ENCODE measurements at regions of chr12 and their contacts with region 1.

Region 1: DNA sequence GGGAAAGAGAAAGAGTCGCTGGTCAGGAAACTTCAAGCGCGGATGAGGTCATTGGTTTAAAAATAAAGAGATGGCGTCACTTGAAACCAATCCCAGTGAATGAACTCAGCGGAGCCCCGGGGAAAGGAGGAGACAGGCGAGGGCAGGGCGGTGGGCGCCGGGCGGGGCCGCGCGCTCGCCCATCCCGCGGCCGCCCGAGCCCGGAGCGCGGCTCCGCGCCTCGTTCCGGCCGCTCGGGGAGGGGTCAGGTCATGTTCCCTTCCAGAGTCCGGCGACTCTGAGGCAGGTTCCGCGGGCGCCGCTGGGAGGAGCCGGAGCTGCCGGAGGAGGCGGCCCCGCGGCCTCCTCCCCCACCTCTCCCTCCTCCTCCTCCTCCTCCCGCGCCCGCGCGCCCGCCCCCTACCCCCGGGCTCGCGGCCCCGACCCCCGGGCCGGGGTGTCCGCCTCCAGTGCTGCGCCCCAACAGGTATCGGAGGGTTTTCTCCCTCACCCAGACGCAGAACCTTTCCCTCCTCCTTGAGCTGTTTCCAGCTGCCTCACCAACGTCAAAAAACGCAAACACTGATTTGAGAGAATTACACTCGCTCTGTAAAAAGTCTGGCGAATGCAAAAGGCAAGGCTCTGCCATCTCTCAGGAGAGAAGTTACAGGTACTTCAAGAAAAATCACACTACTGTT is at the start of gene DUSP16:
- DNase-seq: peak; percentile 92 to 93
- ATAC-seq: peak; percentile 94 to 98 (median 96)
- H3K4me3 ChIP-seq: peak within 1 kb of the TSS; percentile 59 to 89 (median 75)
- H3K27ac ChIP-seq: peak within 1 kb of the TSS; percentile 98 to 100 (median 100)
- H3K4me1 ChIP-seq: peaks cover 0 to 45% (median 32%) of the 10 kb centered on the region in 9 donors
- H3K27me3 ChIP-seq: no peaks in the 10 kb centered on the region
- CTCF ChIP-seq: peak in 6 of 9 donors; percentile 8 to 51 (median 34)
- total RNA-seq, gene DUSP16: 10.9 to 21.7 (median 17.6) TPM

Region 2: DNA sequence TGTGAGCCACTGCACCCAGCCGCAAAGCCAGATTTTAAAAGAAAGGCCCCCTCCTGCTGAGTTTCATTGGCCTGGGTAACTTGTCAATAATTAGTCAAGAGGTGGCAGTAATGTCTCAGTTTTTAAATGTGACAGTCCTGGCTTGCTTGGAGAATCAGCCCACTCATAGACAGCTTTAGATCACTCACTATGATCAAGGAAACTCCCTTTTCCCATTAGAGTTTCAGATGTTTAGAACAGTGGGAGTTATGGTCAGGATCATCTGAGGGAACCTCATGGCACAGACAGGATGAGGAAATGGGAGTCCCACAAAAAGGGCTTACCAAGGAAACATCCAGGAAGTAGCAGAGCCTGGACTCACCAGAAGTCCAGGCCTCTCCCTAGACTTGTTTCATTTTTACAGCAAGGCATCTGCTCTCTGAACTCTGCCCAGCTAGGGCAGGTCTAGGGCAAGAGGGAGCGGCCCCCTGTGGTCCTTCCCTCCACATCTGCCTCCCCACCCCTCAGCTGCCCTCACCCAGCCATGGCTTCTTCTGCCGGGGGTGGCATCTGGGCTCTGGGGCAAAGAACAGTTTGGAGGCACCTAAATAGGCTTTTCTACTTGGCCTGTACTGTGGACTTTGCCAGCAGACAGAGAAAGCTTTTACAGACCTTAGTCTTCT is 480.8 kb before region 1 on chr12:
- intact Hi-C with region 1: loop called in 1 of 10 experiments (anchors 5 kb)
- DNase-seq: peak in 1 of 2 donors; percentile 5
- ATAC-seq: peak; percentile 73 to 93 (median 86)
- H3K4me3 ChIP-seq: no peak overlapping the region
- H3K27ac ChIP-seq: peak overlapping the region in 8 of 10 donors; percentile 59 to 89 (median 70)
- H3K4me1 ChIP-seq: peaks cover 0 to 14% (median 9%) of the 10 kb centered on the region in 9 donors
- H3K27me3 ChIP-seq: no peaks in the 10 kb centered on the region
- CTCF ChIP-seq: peak; percentile 19 to 65 (median 42)

Region 3: DNA sequence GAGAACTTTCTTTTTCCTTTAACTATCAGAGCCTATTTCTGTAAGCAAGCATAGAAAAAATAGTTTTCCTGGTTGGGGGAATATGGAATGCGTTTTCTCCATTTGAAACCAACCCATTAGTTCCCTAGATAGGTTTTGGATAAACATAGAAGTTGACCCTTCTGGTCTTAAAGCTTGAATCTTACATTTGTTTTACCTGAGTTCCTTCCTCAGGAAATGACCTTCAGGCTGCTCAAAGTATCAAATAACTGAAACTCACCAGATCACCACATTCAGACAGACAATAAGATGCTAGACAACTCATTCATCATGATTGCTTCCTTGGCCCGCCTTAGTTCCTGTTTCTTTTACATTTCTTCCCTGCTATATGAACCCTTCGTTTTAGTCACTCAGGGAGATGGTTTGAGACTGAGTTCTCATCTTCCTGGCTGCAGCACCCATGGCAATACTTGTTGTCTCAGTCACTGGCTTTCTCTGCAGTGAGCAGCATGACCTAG is 348.0 kb before region 1 on chr12:
- intact Hi-C with region 1: no loop called
- DNase-seq: no peak
- ATAC-seq: no peak
- H3K4me3 ChIP-seq: no peak overlapping the region
- H3K27ac ChIP-seq: no peak overlapping the region
- H3K4me1 ChIP-seq: peaks cover 0 to 37% (median 23%) of the 10 kb centered on the region in 9 donors
- H3K27me3 ChIP-seq: no peaks in the 10 kb centered on the region
- CTCF ChIP-seq: no peak

Region 4: DNA sequence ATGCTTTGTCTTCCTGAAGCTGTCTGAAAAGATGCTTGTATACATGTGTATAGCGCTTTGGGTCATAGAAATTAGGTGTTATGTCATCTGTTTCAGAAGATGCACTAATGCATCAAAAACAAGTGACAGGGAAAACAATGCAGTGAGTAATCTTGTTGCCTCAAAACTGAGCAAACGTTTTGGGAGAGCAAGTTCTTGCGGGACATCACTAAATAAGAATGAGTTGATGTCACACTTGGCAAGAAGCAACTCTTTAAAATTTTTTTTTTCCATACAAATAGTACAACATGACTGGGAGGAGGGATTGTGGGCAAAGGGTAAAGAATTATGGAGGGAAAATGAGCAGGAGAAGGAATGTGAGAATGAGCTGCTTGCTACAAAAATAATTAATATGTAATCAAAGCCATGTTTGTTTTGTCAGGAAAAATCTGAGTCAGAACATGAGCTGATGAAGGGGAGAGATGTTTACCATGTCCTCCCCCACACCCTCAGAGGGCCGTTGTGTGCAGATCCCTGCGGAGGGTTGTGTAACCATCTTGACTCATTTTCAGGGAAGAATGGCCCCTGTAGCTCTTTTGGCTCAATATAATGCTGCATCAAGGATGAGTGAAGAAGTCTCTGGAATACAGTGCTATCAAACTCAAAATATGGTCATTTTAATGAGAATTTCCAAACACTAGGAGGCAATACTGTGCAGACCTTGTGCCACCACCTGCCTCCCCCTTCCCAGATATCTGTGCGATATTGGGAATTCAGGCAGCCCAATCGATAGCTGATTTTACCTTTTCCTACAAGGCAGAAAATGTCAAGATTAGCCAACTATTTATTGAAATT is 164.5 kb before region 1 on chr12:
- intact Hi-C with region 1: loop called in 2 of 10 experiments (anchors 5 kb)
- DNase-seq: peak; percentile 29 to 48
- ATAC-seq: peak; percentile 82 to 97 (median 91)
- H3K4me3 ChIP-seq: no peak overlapping the region
- H3K27ac ChIP-seq: peak overlapping the region in 8 of 10 donors; percentile 1 to 59 (median 34)
- H3K4me1 ChIP-seq: peaks cover 0 to 32% (median 10%) of the 10 kb centered on the region in 9 donors
- H3K27me3 ChIP-seq: no peaks in the 10 kb centered on the region
- CTCF ChIP-seq: peak in 4 of 9 donors; percentile 18 to 35 (median 31)

Region 5: GRCh38 chr12:12505544-12506495 is 56.9 kb before region 1 on chr12:
- intact Hi-C with region 1: loop called in 5 of 10 experiments (anchors 1 to 5 kb)
- DNase-seq: peak in 1 of 2 donors; percentile 20
- ATAC-seq: peak; percentile 75 to 88 (median 84)
- H3K4me3 ChIP-seq: peak overlapping the region in 7 of 10 donors; percentile 23 to 42 (median 28)
- H3K27ac ChIP-seq: peak overlapping the region; percentile 44 to 87 (median 68)
- H3K4me1 ChIP-seq: peaks cover 0 to 68% (median 56%) of the 10 kb centered on the region in 9 donors
- H3K27me3 ChIP-seq: no peaks in the 10 kb centered on the region
- CTCF ChIP-seq: no peak

Region 6: GRCh38 chr12:12611512-12612306 is 49.0 kb after region 1 on chr12 and contains the start of gene CREBL2:
- intact Hi-C with region 1: loop called in 2 of 10 experiments (anchors 1 to 5 kb)
- DNase-seq: peak; percentile 93 to 94
- ATAC-seq: peak; percentile 97 to 99 (median 97)
- H3K4me3 ChIP-seq: peak within 1 kb of the TSS; percentile 64 to 89 (median 76)
- H3K27ac ChIP-seq: peak within 1 kb of the TSS; percentile 81 to 97 (median 91)
- H3K4me1 ChIP-seq: peaks cover 0 to 58% (median 24%) of the 10 kb centered on the region in 9 donors
- H3K27me3 ChIP-seq: no peaks in the 10 kb centered on the region
- CTCF ChIP-seq: peak in 1 of 9 donors; percentile 16
- total RNA-seq, gene CREBL2: 15.2 to 26.4 (median 18.6) TPM

Region 7: DNA sequence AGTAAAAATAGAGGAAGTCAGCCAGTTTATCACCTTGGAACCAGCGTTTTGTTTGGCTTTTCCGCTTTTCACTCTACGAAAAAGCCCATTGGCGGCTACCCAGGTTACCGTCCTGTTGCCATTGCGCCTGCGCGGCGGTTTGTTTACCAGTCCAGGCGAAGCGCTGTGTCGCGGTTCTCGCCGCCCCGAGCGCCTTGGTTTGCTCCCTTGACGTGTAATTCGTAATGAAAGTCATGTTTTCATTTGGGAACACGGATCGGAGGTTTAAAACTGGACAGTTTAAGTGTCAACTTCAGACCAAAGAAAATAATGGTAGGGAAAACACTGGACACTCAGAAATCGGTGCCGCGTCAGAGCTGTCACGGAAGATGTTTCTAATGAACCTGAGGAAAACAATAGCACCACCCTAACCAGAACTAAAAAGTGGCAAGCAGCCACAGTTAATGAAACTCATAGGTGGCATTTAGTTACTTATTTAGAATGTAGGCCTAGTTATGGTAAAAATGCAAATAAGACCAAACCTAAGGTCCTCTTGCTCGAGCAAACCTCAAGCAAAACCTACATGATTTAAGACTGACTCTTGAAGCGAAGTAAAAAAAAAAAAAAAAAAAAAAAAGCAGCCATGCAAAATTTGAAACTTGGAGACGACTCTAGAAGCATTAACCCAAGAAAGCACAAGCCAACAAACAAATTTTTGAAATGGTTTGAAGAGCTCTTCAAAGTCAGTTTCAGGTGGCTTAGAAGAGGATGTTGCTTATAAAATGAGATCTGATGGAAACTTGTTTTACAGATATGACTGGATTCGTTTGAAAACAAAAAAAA is 134.1 kb after region 1 on chr12:
- intact Hi-C with region 1: loop called in 5 of 10 experiments (anchors 1 to 10 kb)
- DNase-seq: peak; percentile 91 to 93
- ATAC-seq: peak; percentile 88 to 98 (median 94)
- H3K4me3 ChIP-seq: peak overlapping the region; percentile 35 to 71 (median 62)
- H3K27ac ChIP-seq: peak overlapping the region; percentile 91 to 99 (median 96)
- H3K4me1 ChIP-seq: peaks cover 0 to 17% (median 6%) of the 10 kb centered on the region in 9 donors
- H3K27me3 ChIP-seq: no peaks in the 10 kb centered on the region
- CTCF ChIP-seq: no peak

Region 8: GRCh38 chr12:12716793-12717585 is 154.3 kb after region 1 on chr12 and contains the start of gene CDKN1B:
- intact Hi-C with region 1: loop called in 2 of 10 experiments (anchors 5 kb)
- DNase-seq: peak; percentile 91 to 92
- ATAC-seq: peak; percentile 92 to 96 (median 94)
- H3K4me3 ChIP-seq: peak within 1 kb of the TSS; percentile 64 to 99 (median 96)
- H3K27ac ChIP-seq: peak within 1 kb of the TSS; percentile 99 to 100 (median 100)
- H3K4me1 ChIP-seq: peaks cover 15 to 67% (median 61%) of the 10 kb centered on the region in 9 donors
- H3K27me3 ChIP-seq: no peaks in the 10 kb centered on the region
- CTCF ChIP-seq: peak in 1 of 9 donors; percentile 11
- total RNA-seq, gene CDKN1B: 26.3 to 56.2 (median 39.2) TPM